GM12878 (cell line): ENCODE measurements at regions of chr14 and their contacts with region 1.

Region 1: DNA sequence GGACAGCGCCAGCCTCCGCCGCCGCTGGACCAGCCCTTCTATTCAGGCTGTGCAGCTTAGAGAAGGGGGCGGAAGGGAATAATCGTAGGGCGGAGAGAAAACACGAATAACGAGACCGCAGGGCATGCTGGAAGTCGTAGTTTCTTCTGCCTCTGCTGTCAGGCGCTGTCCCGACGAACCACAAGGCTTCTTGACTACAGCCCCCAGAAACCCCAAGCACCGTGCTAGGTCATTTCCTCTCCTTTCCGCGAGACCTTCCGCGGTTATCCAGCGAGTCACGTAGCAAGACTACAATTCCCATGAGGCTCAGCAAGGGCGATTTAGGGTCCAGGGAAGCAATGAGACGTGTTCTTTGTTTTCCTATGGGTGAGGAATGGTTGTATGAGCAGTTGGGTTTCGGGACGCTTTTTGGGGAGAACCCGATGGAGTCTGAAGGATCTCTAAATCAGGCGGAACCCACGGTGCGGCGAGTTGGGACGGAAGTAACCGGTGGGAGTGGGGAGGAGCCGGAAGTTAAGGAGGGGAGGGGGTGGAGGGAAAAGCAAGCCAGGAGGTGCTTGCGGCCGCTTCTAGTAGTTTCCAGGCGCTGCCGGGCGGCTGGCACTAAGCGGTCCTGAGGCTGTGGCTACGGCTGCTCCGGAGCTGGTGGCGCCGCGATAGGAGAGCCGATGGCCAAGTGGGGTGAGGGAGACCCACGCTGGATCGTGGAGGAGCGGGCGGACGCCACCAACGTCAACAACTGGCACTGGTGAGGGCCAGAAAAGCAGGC is at the starts of genes AHSA1 and VIPAS39:
- DNase-seq: peak; percentile 99
- ATAC-seq: peak; percentile 95
- H3K4me3 ChIP-seq: peak within 1 kb of the TSS; percentile 88
- H3K27ac ChIP-seq: peak within 1 kb of the TSS; percentile 97
- H3K4me1 ChIP-seq: peaks cover 13% of the 10 kb centered on the region
- H3K27me3 ChIP-seq: no peaks in the 10 kb centered on the region
- CTCF ChIP-seq: no peak
- EP300 ChIP-seq: no peak
- POLR2A ChIP-seq: peak; percentile 93
- RAD21 ChIP-seq: no peak
- polyA plus RNA-seq, gene AHSA1: 51.8 to 98.3 TPM
- polyA plus RNA-seq, gene VIPAS39: 6.7 to 10.5 TPM

Region 2: GRCh38 chr14:76615331-76615730 is 842.4 kb before region 1 on chr14:
- CTCF ChIA-PET with region 1: no interaction called
- POLR2A ChIA-PET with region 1: no interaction called
- RAD21 ChIA-PET with region 1: no interaction called
- SMC1A ChIA-PET with region 1: no interaction called
- in situ Hi-C with region 1: no loop called
- intact Hi-C with region 1: no loop called
- DNase-seq: no peak
- ATAC-seq: no peak
- H3K4me3 ChIP-seq: no peak overlapping the region
- H3K27ac ChIP-seq: no peak overlapping the region
- H3K4me1 ChIP-seq: no peaks in the 10 kb centered on the region
- H3K27me3 ChIP-seq: peaks cover 0 to 3% of the 10 kb centered on the region in 2 experiments; a peak in 1 of 4 replicates
- CTCF ChIP-seq: no peak
- EP300 ChIP-seq: no peak
- POLR2A ChIP-seq: no peak
- RAD21 ChIP-seq: no peak

Region 3: GRCh38 chr14:77151918-77152588 is 305.7 kb before region 1 on chr14:
- CTCF ChIA-PET with region 1: interaction called, 3 read pairs
- POLR2A ChIA-PET with region 1: no interaction called
- RAD21 ChIA-PET with region 1: no interaction called
- SMC1A ChIA-PET with region 1: no interaction called
- in situ Hi-C with region 1: no loop called
- intact Hi-C with region 1: loop called (anchors 5 kb)
- DNase-seq: no peak
- ATAC-seq: peak; percentile 91
- H3K4me3 ChIP-seq: no peak overlapping the region
- H3K27ac ChIP-seq: no peak overlapping the region
- H3K4me1 ChIP-seq: no peaks in the 10 kb centered on the region
- H3K27me3 ChIP-seq: peaks cover 0 to 2% of the 10 kb centered on the region in 2 experiments; a peak in 2 of 4 replicates
- CTCF ChIP-seq: peak in 2 of 3 experiments; percentile 7 to 41; a peak in 3 of 6 replicates
- EP300 ChIP-seq: no peak
- POLR2A ChIP-seq: no peak
- RAD21 ChIP-seq: peak; percentile 58

Region 4: DNA sequence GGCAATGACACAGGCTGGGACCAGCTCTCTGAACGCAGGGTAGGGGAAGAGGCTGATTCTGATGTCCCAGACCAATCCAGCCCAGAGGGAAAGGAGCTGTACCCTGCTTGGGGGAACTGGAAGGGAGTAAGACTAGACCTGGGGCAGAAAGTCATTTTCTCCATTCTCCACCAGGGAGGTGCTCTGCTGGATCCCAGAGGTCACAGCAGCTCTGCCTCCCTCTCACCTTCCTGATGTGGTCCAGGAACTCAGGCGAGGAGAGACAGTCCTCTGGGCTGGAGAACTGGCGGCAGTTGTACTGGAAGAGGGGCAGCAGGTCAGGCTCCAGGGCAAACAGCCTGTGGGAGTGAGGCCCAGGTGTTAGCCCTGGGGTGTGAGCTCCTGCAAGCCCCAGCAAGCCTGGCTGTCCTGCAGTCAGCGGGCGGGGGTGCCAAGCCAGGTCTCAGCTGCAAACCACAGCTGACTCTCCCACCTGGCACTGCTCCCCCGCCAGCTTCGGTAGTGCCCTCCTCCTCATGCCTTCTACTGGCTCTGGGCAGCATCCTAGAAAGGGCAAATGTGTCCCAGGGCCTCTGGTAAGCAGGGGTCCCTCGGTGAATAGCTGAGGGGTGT is 188.6 kb before region 1 on chr14:
- CTCF ChIA-PET with region 1: no interaction called
- POLR2A ChIA-PET with region 1: no interaction called
- RAD21 ChIA-PET with region 1: no interaction called
- SMC1A ChIA-PET with region 1: no interaction called
- in situ Hi-C with region 1: no loop called
- intact Hi-C with region 1: no loop called
- DNase-seq: no peak
- ATAC-seq: peak; percentile 38; the same call in 2 of the 3 replicates
- H3K4me3 ChIP-seq: no peak overlapping the region
- H3K27ac ChIP-seq: no peak overlapping the region
- H3K4me1 ChIP-seq: no peaks in the 10 kb centered on the region
- H3K27me3 ChIP-seq: peaks cover 0 to 6% of the 10 kb centered on the region in 2 experiments; a peak in 3 of 4 replicates
- CTCF ChIP-seq: no peak
- EP300 ChIP-seq: no peak
- POLR2A ChIP-seq: no peak
- RAD21 ChIP-seq: no peak

Region 5: GRCh38 chr14:77376771-77377501 is 80.8 kb before region 1 on chr14 and contains the starts of genes SAMD15 and TMED8:
- CTCF ChIA-PET with region 1: interaction called, 9 read pairs
- POLR2A ChIA-PET with region 1: interaction called, 5 read pairs
- RAD21 ChIA-PET with region 1: interaction called, 6 read pairs
- SMC1A ChIA-PET with region 1: interaction called, 5 read pairs
- in situ Hi-C with region 1: no loop called
- intact Hi-C with region 1: loop called (anchors 2 kb)
- DNase-seq: peak; percentile 53
- ATAC-seq: peak; percentile 94
- H3K4me3 ChIP-seq: peak within 1 kb of the TSS; percentile 83
- H3K27ac ChIP-seq: peak within 1 kb of the TSS; percentile 89
- H3K4me1 ChIP-seq: peaks cover 15% of the 10 kb centered on the region
- H3K27me3 ChIP-seq: no peaks in the 10 kb centered on the region
- CTCF ChIP-seq: peak in 2 of 3 experiments; percentile 25 to 27; a peak in 2 of 6 replicates
- EP300 ChIP-seq: no peak
- POLR2A ChIP-seq: peak; percentile 75
- RAD21 ChIP-seq: no peak
- polyA plus RNA-seq, gene SAMD15: 0.63 to 0.93 TPM
- polyA plus RNA-seq, gene TMED8: 7.3 to 7.4 TPM

Region 6: DNA sequence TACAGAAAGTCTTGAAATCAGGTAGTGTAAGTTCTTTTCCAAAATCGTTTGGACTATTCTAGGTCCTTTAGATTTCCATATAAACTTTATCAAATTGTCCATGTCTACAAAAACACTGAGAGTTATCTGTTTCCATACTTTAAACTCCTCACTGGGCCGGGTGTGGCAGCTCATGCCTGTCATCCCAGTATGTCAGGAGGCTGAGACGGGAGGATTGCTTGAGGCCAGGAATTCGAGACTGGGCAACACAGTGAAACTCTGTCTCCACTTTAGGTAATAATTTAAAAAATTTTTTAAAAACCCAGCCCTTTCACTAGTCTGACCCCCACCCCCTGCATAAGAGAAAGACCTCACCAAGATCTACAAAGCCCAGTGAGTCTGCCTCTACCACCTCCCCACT is 47.3 kb after region 1 on chr14:
- CTCF ChIA-PET with region 1: interaction called, 10 read pairs
- POLR2A ChIA-PET with region 1: no interaction called
- RAD21 ChIA-PET with region 1: interaction called, 9 read pairs
- SMC1A ChIA-PET with region 1: interaction called, 5 read pairs
- in situ Hi-C with region 1: no loop called
- intact Hi-C with region 1: no loop called
- DNase-seq: no peak
- ATAC-seq: no peak
- H3K4me3 ChIP-seq: no peak overlapping the region
- H3K27ac ChIP-seq: no peak overlapping the region
- H3K4me1 ChIP-seq: no peaks in the 10 kb centered on the region
- H3K27me3 ChIP-seq: no peaks in the 10 kb centered on the region; a peak in 1 of 4 replicates
- CTCF ChIP-seq: no peak
- EP300 ChIP-seq: no peak
- POLR2A ChIP-seq: no peak
- RAD21 ChIP-seq: no peak

Region 7: DNA sequence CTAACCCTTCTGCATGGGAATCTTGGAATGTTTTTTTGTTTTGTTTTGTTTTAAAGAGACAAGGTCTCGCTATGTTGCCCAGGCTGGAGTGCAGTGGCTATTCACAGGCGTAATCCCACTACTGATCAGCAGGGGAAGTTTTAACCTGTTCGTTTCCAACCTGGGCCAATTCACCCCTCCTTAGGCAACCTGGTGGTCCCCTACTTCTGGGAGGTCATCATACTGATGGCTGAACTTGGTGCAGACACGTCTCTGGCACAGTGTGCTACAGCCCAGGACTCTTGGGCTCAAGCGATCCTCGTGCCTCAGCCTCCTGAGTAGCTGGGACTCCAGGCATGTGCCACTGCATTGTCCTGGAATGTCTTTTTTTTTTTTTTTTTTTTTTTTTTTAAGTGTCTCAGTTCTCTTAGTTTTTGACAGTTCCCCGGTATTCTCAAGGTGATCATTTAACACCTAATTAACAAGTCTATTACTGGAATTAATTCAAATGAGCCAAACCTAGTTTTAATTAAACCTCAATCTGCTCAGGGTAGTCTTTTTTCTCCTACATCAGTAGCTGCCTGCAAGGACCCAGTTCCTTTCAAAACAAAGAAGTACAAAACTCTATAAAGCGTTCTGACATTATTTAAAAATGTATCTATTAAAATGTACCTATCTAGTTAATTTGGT is 89.9 kb after region 1 on chr14:
- CTCF ChIA-PET with region 1: interaction called, 140 read pairs
- POLR2A ChIA-PET with region 1: interaction called, 3 read pairs
- RAD21 ChIA-PET with region 1: interaction called, 44 read pairs
- SMC1A ChIA-PET with region 1: interaction called, 91 read pairs
- in situ Hi-C with region 1: loop called (anchors 5 kb)
- intact Hi-C with region 1: loop called (anchors 1 kb)
- DNase-seq: no peak
- ATAC-seq: no peak
- H3K4me3 ChIP-seq: no peak overlapping the region
- H3K27ac ChIP-seq: no peak overlapping the region
- H3K4me1 ChIP-seq: peaks cover 7% of the 10 kb centered on the region
- H3K27me3 ChIP-seq: no peaks in the 10 kb centered on the region
- CTCF ChIP-seq: peak in 1 of 3 experiments; percentile 5; a peak in 1 of 6 replicates
- EP300 ChIP-seq: no peak
- POLR2A ChIP-seq: no peak
- RAD21 ChIP-seq: no peak

Region 8: GRCh38 chr14:77707724-77708408 is 250.2 kb after region 1 on chr14 and contains the starts of genes ALKBH1 and SLIRP:
- CTCF ChIA-PET with region 1: interaction called, 31 read pairs
- POLR2A ChIA-PET with region 1: interaction called, 5 read pairs
- RAD21 ChIA-PET with region 1: interaction called, 13 read pairs
- SMC1A ChIA-PET with region 1: interaction called, 16 read pairs
- in situ Hi-C with region 1: no loop called
- intact Hi-C with region 1: loop called (anchors 2 kb)
- DNase-seq: peak; percentile 26
- ATAC-seq: peak; percentile 98
- H3K4me3 ChIP-seq: peak within 1 kb of the TSS; percentile 92
- H3K27ac ChIP-seq: peak within 1 kb of the TSS; percentile 64
- H3K4me1 ChIP-seq: peaks cover 7% of the 10 kb centered on the region
- H3K27me3 ChIP-seq: no peaks in the 10 kb centered on the region
- CTCF ChIP-seq: no peak
- EP300 ChIP-seq: no peak
- POLR2A ChIP-seq: peak; percentile 97
- RAD21 ChIP-seq: no peak
- polyA plus RNA-seq, gene ALKBH1: 6.5 to 9.3 TPM
- polyA plus RNA-seq, gene SLIRP: 1,396 to 1,510 TPM